GM10248 (cell line): ENCODE measurements at regions of chr19 and their contacts with region 1.

Region 1: DNA sequence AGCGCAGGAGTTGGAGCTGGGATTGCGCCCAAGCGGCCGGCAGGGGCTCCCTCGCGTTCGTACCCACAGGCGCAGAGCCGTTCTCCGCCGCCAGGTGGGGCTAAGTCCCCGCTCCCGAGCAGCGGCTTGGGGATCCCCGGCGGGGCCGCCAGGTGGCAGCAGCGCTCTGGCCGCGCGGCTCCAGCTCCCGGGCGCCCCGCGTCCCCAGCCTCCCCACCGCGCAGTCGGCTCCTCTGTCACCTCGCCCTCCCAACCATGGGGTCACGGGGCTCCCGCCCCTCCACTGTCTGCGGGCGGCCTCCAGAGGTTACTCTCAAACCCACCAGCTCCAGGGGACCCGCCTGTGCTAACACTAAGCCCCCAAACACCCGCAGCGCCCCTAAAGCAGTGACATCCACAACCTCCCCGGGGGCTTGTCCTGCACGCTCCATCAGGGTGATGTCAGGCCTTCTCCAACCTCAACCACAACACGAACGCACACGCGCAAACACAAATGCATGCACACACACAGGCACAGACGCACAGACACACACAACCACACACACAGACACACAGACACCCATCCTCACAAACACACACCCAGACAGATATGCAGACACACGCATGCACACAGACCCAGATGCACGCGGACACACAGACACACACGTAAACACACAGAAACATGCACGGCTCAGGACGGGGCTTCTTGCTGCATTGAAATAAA is 18.4 kb upstream of the KCTD15 start:
- DNase-seq: peak; percentile 95
- CTCF ChIP-seq: peak; percentile 100

Region 2: DNA sequence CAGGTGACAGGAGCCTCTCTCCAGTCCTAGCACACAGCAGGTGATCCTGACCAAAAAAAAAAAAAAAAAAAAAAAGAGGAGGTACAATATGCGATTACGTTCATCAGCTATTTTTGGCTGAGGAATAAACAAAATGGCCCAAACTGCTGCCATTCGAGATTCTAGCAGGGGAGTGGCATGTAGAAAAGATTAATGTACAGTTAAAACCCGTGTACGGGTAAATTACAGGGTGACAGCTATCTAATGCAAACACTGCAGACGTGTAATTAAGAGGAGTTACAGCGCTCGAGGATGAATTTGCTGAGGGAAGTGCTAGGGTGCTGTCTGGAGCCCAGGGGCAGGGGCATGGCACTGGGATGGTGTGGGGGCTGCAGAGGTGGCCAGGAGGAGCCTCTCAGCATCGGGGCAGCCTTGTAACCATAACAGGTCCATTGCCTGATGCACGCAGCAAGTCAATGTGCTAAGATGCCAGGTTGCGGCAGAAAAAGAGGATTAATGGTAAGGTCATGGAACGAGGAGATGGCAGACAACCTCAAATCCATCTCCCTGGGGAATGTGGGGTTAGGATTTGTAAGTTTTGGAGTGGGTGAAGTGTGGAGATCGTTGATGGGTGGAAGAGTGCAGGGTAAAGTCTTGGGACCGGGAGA is 139.1 kb before region 1 on chr19:
- CTCF ChIA-PET with region 1: no interaction called
- POLR2A ChIA-PET with region 1: no interaction called
- DNase-seq: no peak
- CTCF ChIP-seq: no peak

Region 3: GRCh38 chr19:33841685-33842084 is 63.4 kb after region 1 on chr19:
- CTCF ChIA-PET with region 1: no interaction called
- POLR2A ChIA-PET with region 1: no interaction called
- DNase-seq: no peak
- CTCF ChIP-seq: no peak

Region 4: DNA sequence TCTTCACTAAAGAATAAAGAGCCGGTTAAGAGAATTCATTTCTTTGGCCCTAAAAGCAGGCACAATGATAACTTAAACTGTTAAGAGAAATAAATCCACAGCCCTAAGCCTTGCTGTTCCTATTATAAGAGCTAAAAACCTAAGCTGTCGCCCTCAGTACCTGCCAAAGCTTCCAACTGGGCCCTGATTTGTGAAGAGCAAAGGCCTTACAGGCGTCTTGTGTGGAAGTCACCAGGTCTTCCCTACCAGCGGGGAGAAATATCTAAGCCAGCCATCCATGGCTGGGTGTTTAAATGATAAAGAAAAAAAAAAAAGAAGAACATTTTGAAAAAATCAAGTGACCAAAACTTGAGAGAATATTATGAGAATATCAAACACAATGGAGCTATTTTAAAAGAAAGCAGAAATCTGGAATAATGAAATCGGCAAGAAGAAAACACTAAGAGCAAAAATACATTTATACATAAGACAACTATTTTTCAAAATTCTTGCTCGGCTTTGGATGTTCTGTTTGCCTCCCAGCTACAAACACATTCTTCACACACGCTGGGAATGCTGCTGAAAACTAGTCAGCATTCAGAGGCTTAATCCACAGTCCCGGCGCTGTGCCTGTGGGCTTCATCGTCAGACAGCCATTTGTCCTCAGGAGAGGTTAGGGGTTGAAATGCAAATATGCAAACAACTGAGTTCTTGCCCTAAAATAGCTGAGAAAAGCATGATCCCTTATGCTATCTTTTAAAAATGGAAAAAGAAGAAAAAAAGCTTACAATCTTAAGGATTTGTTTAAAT is 304.2 kb after region 1 on chr19:
- CTCF ChIA-PET with region 1: interaction called, 11 read pairs
- POLR2A ChIA-PET with region 1: no interaction called
- DNase-seq: no peak
- CTCF ChIP-seq: no peak

Region 5: DNA sequence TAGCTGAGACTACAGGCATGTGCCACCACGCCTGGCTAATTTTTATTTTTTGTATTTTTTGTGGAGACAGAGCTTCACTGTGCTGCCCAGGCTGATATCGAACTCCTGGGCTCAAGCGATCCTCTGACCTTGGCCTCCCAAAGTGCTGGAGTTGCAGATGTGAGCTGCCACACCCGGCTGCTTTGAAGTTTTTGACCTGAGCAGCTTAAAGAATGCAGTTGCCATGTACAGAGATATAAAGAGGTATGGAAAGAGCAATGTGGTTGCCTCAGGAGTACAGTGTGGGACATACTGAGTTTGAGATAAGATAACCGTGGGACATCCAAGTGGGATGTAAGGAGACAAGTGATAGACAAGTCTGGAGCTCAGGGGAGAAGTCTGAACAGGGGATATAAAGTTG is 311.3 kb after region 1 on chr19:
- CTCF ChIA-PET with region 1: interaction called, 17 read pairs
- POLR2A ChIA-PET with region 1: no interaction called
- DNase-seq: no peak
- CTCF ChIP-seq: no peak

Region 6: GRCh38 chr19:34096020-34096915 is 318.0 kb after region 1 on chr19:
- CTCF ChIA-PET with region 1: interaction called, 30 read pairs
- POLR2A ChIA-PET with region 1: no interaction called
- DNase-seq: peak; percentile 33
- CTCF ChIP-seq: peak; percentile 65

Region 7: DNA sequence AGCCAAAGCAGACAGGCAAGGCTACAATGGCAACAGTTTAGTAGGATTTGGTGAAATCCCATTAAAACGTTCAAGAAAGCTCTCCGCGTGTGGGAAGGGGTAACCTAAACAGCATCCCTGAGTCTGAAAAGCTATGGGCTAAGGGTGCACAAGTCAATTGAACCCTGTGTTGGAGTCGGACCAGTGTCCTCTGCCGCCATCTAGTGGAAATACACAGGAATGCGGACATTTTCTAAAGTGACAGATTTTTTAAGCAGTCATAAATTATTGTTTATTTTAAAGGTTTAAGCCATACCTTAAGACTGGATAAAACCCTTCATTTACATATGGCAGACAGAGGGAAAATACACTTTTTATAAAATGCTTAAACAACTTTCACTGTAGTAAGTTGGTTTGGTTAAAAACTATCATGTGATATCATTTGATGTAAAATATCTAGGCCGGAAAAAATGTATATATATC is 367.5 kb after region 1 on chr19:
- CTCF ChIA-PET with region 1: interaction called, 57 read pairs
- POLR2A ChIA-PET with region 1: no interaction called
- DNase-seq: peak; percentile 62
- CTCF ChIP-seq: peak; percentile 74

Region 8: GRCh38 chr19:34501339-34502320 is 723.4 kb after region 1 on chr19:
- CTCF ChIA-PET with region 1: interaction called, 13 read pairs
- POLR2A ChIA-PET with region 1: no interaction called
- DNase-seq: peak; percentile 95
- CTCF ChIP-seq: peak; percentile 100

Region 9: DNA sequence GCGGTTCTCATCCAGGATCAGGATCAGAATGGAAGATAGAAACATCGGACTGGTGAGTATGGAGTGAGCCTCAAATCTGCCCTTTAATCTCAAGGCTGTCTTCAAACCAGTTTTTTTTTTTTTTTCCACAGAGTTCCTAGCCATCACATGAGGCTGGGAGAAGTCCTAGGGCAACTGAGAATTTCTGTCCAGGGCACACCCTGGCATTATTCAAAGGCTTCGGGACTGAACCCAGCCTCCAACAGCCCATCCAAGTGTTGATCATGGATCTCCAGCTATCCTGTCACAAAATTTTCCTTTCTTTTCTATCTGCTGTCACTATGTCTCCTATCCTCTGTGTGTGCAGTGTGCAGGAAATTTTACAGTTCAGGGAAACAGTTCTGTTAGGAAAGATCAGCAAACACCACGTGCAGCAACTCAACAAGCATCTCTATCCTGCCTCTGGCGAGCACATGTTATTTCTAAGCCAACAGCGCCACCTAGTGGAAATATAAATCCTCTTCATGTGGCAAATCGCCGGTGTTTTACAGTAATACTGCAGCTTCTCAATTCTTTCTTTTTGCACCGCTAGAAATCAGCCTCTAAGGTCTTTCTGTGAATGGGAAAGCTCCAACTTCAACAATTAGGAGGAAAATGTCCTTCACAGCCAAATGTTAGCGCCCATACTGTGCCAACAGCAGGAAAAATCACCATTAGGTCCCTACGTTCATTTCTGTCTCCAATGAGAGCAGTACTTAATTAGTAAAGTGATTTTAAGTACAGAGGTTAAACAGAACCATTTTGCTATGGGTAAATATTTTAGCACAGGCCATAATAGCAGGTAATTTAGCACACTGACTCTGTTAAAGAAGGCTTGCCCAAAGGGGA is 934.4 kb after region 1 on chr19:
- CTCF ChIA-PET with region 1: interaction called, 11 read pairs
- POLR2A ChIA-PET with region 1: no interaction called
- DNase-seq: peak; percentile 50
- CTCF ChIP-seq: peak; percentile 73